Endothelial cell of umbilical vein (primary cell): ENCODE measurements at regions of chr2 and their contacts with region 1.

Region 1: GRCh38 chr2:163504568-163504967 is 231.2 kb downstream of the FIGN start:
- DNase-seq: no peak
- H3K4me3 ChIP-seq: no peak overlapping the region
- H3K27ac ChIP-seq: no peak overlapping the region
- H3K4me1 ChIP-seq: no peaks in the 10 kb centered on the region
- H3K27me3 ChIP-seq: no peaks in the 10 kb centered on the region
- CTCF ChIP-seq: no peak
- POLR2A ChIP-seq: no peak

Region 2: GRCh38 chr2:163491850-163492249 is 12.7 kb before region 1 on chr2:
- CTCF ChIA-PET with region 1: no interaction called
- POLR2A ChIA-PET with region 1: no interaction called
- dilution Hi-C with region 1: no loop called
- intact Hi-C with region 1: loop called (anchors 1 kb)
- DNase-seq: no peak
- H3K4me3 ChIP-seq: no peak overlapping the region
- H3K27ac ChIP-seq: no peak overlapping the region
- H3K4me1 ChIP-seq: no peaks in the 10 kb centered on the region
- H3K27me3 ChIP-seq: no peaks in the 10 kb centered on the region
- CTCF ChIP-seq: no peak
- POLR2A ChIP-seq: no peak